ENCODE measurements at regions of chr4 and their contacts with region 1.

Region 1: DNA sequence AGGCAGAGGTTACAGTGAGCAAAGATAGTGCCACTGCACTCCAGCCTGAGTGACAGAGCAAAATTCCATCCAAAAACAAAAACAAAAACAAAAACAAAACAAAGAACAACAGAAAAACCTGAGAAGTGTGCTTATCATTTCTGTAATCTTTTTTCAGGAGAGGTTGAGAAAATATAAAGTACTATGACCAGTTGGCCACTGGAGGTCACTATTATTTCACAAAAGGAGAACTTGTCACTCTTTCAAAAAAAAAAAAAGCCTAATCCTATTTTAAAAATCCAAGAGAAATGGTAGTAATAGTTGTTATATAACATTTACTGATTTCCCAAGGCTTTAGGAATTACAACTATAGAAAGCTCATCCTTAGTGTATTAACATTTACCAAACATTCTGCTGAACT is 24.9 kb upstream of the RNF150 start:
- DNase-seq: peak in 1 of 2 experiments; percentile 18
- H3K4me3 ChIP-seq: no peak overlapping the region
- H3K4me3 Mint-ChIP-seq: no peak overlapping the region
- H3K27ac Mint-ChIP-seq: no peak overlapping the region
- H3K4me1 ChIP-seq: no peaks in the 10 kb centered on the region
- H3K4me1 Mint-ChIP-seq: no peaks in the 10 kb centered on the region
- H3K27me3 ChIP-seq: no peaks in the 10 kb centered on the region
- H3K27me3 Mint-ChIP-seq: peaks cover 11% of the 10 kb centered on the region
- CTCF ChIP-seq: peak; percentile 37 to 47

Region 2: GRCh38 chr4:140971077-140971792 is 187.0 kb before region 1 on chr4:
- CTCF ChIA-PET with region 1: interaction called, 13 read pairs
- POLR2A ChIA-PET with region 1: no interaction called
- intact Hi-C with region 1: no loop called
- DNase-seq: no peak
- H3K4me3 ChIP-seq: no peak overlapping the region
- H3K4me3 Mint-ChIP-seq: no peak overlapping the region
- H3K27ac Mint-ChIP-seq: no peak overlapping the region
- H3K4me1 ChIP-seq: no peaks in the 10 kb centered on the region
- H3K4me1 Mint-ChIP-seq: peaks cover under 1% of the 10 kb centered on the region
- H3K27me3 ChIP-seq: no peaks in the 10 kb centered on the region
- H3K27me3 Mint-ChIP-seq: peaks cover 4% of the 10 kb centered on the region
- CTCF ChIP-seq: no peak

Region 3: GRCh38 chr4:141654098-141654497 is 495.9 kb after region 1 on chr4:
- CTCF ChIA-PET with region 1: no interaction called
- POLR2A ChIA-PET with region 1: no interaction called
- intact Hi-C with region 1: loop called (anchors 1 kb)
- DNase-seq: peak; percentile 35 to 46
- H3K4me3 ChIP-seq: no peak overlapping the region
- H3K4me3 Mint-ChIP-seq: no peak overlapping the region
- H3K27ac Mint-ChIP-seq: no peak overlapping the region
- H3K4me1 ChIP-seq: no peaks in the 10 kb centered on the region
- H3K4me1 Mint-ChIP-seq: no peaks in the 10 kb centered on the region
- H3K27me3 ChIP-seq: no peaks in the 10 kb centered on the region
- H3K27me3 Mint-ChIP-seq: peaks cover 3% of the 10 kb centered on the region
- CTCF ChIP-seq: peak; percentile 21 to 75

Region 4: DNA sequence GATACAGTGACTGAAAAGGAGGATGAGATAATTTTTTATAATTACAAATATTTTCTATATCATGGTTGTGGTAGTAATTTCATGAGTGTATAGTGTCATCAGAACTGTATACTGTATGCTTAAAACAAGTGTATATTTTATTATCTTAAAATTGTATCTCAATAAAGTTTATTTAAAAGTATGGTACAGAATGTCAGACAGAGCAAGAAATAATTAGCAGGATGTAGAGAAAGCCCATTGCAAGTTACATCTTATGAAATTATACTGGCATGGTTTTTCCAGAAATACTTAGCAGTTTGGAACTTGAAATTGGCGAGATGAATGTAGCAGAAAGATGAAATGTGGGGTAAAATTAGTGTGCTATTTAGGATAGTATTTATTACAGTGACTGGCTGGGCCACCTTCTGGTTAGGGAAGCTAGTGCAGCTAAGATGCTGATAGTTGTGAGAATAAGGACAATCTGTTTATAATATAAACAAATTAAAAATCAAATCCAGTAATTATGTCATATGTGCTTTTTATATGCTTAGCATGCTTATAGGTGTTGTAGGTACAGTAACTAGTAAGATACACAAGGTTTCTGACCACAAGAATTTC is 552.9 kb after region 1 on chr4:
- CTCF ChIA-PET with region 1: no interaction called
- POLR2A ChIA-PET with region 1: no interaction called
- intact Hi-C with region 1: loop called (anchors 1 kb)
- DNase-seq: no peak
- H3K4me3 ChIP-seq: no peak overlapping the region
- H3K4me3 Mint-ChIP-seq: no peak overlapping the region
- H3K27ac Mint-ChIP-seq: no peak overlapping the region
- H3K4me1 ChIP-seq: no peaks in the 10 kb centered on the region
- H3K4me1 Mint-ChIP-seq: no peaks in the 10 kb centered on the region
- H3K27me3 ChIP-seq: no peaks in the 10 kb centered on the region
- H3K27me3 Mint-ChIP-seq: no peaks in the 10 kb centered on the region
- CTCF ChIP-seq: peak; percentile 37 to 56

Measured in Caco-2 (cell line).